CD8-positive, alpha-beta memory T cell (primary cell): ENCODE measurements at regions of chr17 and their contacts with region 1.

Region 1: GRCh38 chr17:40559954-40560591 is 5.2 kb downstream of the CCR7 start:
- DNase-seq: peak; percentile 75 to 85 (median 79)
- H3K4me3 ChIP-seq: peak overlapping the region; percentile 99
- H3K4me3 Mint-ChIP-seq: peak overlapping the region; percentile 88 to 91 (median 90)
- H3K27ac ChIP-seq: peak overlapping the region; percentile 96
- H3K27ac Mint-ChIP-seq: peak overlapping the region; percentile 92 to 100 (median 98)
- H3K4me1 ChIP-seq: peaks cover 96% of the 10 kb centered on the region
- H3K4me1 Mint-ChIP-seq: peaks cover 74 to 96% (median 94%) of the 10 kb centered on the region in 3 donors
- H3K27me3 ChIP-seq: no peaks in the 10 kb centered on the region
- H3K27me3 Mint-ChIP-seq: peaks cover 0 to 7% of the 10 kb centered on the region in 2 donors

Region 2: GRCh38 chr17:40355123-40355803 is 204.8 kb before region 1 on chr17:
- CTCF ChIA-PET with region 1: interaction called, 13 read pairs
- POLR2A ChIA-PET with region 1: interaction called, 4 read pairs
- DNase-seq: peak; percentile 63 to 82 (median 71)
- H3K4me3 ChIP-seq: no peak overlapping the region
- H3K4me3 Mint-ChIP-seq: peak overlapping the region in 1 of 7 donors; percentile 32
- H3K27ac ChIP-seq: no peak overlapping the region
- H3K27ac Mint-ChIP-seq: peak overlapping the region in 6 of 8 donors; percentile 19 to 75 (median 41)
- H3K4me1 ChIP-seq: no peaks in the 10 kb centered on the region
- H3K4me1 Mint-ChIP-seq: peaks cover 14 to 20% (median 17%) of the 10 kb centered on the region in 3 donors
- H3K27me3 ChIP-seq: no peaks in the 10 kb centered on the region
- H3K27me3 Mint-ChIP-seq: peaks cover 0 to 4% of the 10 kb centered on the region in 2 donors

Region 3: DNA sequence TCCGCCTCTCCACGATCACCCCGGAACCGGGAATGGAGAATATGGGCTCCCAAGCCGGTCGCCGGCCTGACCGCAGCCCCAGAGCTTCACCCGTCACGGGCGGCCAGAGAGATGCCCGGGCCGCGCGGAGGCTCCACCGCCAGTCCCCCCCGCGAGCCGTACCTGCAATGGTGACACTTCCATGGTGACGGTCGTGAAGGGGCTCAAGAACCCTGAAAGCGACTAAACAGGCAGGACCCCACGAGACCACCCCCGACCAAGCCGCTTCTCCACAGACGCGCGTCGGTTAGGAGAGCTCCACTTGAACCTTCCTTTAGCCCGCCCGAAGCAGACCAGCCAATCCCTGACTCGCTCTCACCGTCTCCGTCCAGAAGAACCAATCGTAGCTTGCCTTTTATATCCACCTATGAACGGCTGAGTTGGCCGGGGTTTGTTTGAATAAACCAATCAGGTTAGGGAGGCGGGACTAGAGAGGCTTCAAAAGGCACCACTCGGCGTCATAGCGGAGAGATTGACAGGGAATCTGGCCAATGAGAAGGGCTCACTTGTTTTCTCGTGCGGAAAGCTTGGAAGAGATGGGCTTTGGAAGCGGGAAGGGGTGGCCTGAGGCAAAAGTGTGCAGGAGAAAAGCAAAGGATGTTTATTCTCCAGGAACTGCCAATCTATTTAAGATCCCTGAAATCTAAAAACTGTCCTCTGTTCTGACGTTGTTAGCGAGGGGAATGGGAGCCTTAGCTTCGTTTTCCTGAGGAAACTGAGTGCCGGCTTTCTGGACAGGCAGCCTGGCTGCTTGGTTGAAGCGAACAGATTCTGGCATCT is 142.3 kb before region 1 on chr17 and contains the start of gene TOP2A:
- CTCF ChIA-PET with region 1: interaction called, 16 read pairs
- POLR2A ChIA-PET with region 1: no interaction called
- DNase-seq: peak; percentile 84 to 98 (median 97)
- H3K4me3 ChIP-seq: peak within 1 kb of the TSS; percentile 98
- H3K4me3 Mint-ChIP-seq: peak within 1 kb of the TSS; percentile 86 to 96 (median 94)
- H3K27ac ChIP-seq: peak within 1 kb of the TSS; percentile 81
- H3K27ac Mint-ChIP-seq: peak within 1 kb of the TSS; percentile 59 to 93 (median 84)
- H3K4me1 ChIP-seq: peaks cover 10% of the 10 kb centered on the region
- H3K4me1 Mint-ChIP-seq: peaks cover 17 to 29% (median 23%) of the 10 kb centered on the region in 3 donors
- H3K27me3 ChIP-seq: no peaks in the 10 kb centered on the region
- H3K27me3 Mint-ChIP-seq: peaks cover 4 to 5% of the 10 kb centered on the region in 2 donors
- total RNA-seq, gene TOP2A: 138 to 143 TPM

Region 4: GRCh38 chr17:40531051-40531991 is 28.8 kb before region 1 on chr17:
- CTCF ChIA-PET with region 1: interaction called, 475 read pairs
- POLR2A ChIA-PET with region 1: interaction called, 31 read pairs
- DNase-seq: peak; percentile 27 to 83 (median 60)
- H3K4me3 ChIP-seq: no peak overlapping the region
- H3K4me3 Mint-ChIP-seq: peak overlapping the region; percentile 19 to 78 (median 57)
- H3K27ac ChIP-seq: no peak overlapping the region
- H3K27ac Mint-ChIP-seq: peak overlapping the region; percentile 65 to 99 (median 94)
- H3K4me1 ChIP-seq: peaks cover 79% of the 10 kb centered on the region
- H3K4me1 Mint-ChIP-seq: peaks cover 68 to 85% (median 80%) of the 10 kb centered on the region in 3 donors
- H3K27me3 ChIP-seq: no peaks in the 10 kb centered on the region
- H3K27me3 Mint-ChIP-seq: peaks cover 0 to 3% of the 10 kb centered on the region in 2 donors

Region 5: GRCh38 chr17:40582328-40582901 is 22.3 kb after region 1 on chr17:
- CTCF ChIA-PET with region 1: interaction called, 21 read pairs
- POLR2A ChIA-PET with region 1: interaction called, 14 read pairs
- DNase-seq: peak in 4 of 5 donors; percentile 24 to 88 (median 74)
- H3K4me3 ChIP-seq: peak overlapping the region; percentile 46
- H3K4me3 Mint-ChIP-seq: peak overlapping the region; percentile 1 to 78 (median 77)
- H3K27ac ChIP-seq: peak overlapping the region; percentile 19
- H3K27ac Mint-ChIP-seq: peak overlapping the region; percentile 68 to 94 (median 89)
- H3K4me1 ChIP-seq: peaks cover 61% of the 10 kb centered on the region
- H3K4me1 Mint-ChIP-seq: peaks cover 57 to 95% (median 84%) of the 10 kb centered on the region in 3 donors
- H3K27me3 ChIP-seq: no peaks in the 10 kb centered on the region
- H3K27me3 Mint-ChIP-seq: no peaks in the 10 kb centered on the region

Region 6: GRCh38 chr17:40622509-40622928 is 62.4 kb after region 1 on chr17:
- CTCF ChIA-PET with region 1: interaction called, 108 read pairs
- POLR2A ChIA-PET with region 1: interaction called, 5 read pairs
- DNase-seq: peak in 2 of 5 donors; percentile 57 to 80
- H3K4me3 ChIP-seq: no peak overlapping the region
- H3K4me3 Mint-ChIP-seq: peak overlapping the region; percentile 24 to 65 (median 32)
- H3K27ac ChIP-seq: no peak overlapping the region
- H3K27ac Mint-ChIP-seq: peak overlapping the region; percentile 34 to 91 (median 82)
- H3K4me1 ChIP-seq: peaks cover 35% of the 10 kb centered on the region
- H3K4me1 Mint-ChIP-seq: peaks cover 25 to 49% (median 41%) of the 10 kb centered on the region in 3 donors
- H3K27me3 ChIP-seq: peaks cover 2% of the 10 kb centered on the region
- H3K27me3 Mint-ChIP-seq: no peaks in the 10 kb centered on the region